ENCODE measurements at regions of chr2 and their contacts with region 1.

Region 1: DNA sequence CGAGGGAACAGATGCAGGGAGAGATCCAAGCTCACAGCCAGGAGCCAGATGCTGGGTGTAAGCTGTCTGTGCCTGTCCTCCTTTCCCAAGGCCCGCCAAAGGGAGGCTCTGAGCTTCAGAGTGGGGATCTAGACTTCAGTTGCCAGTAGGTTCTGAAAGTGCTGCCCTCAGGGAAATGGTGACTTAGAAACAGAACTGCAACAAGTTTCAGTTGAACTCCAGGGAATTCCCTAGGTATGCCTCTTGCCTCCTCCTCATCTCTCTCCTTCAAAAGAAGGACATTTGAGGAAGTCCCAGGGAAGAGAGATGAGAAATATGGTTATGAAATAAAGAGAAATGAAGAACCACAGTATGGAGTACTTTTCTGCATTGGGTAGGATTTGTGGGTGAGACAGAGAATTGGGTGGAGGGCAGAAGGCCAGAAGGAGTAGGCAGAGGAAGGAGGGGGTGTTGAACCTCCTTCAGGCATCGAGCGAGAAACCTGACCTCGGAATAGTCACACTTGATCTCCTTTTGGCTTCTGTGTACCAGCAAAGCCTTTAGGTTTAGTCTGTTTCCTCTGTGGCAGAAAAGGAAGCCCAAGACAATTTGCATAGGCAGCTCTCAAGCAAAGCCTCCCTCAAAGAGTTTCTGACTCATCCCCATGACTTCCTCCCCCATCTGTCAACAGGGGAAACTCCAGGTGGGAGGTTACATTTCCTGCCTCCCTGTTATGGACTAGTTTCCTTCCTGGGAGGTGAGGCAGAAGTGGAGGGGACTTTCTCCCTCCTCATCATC is 45.7 kb downstream of the QPCT start:
- DNase-seq: no peak
- H3K4me3 ChIP-seq: no peak overlapping the region; the same call in 1 of the 2 replicates
- CTCF ChIP-seq: no peak

Region 2: GRCh38 chr2:37376421-37377186 is 13.6 kb before region 1 on chr2:
- CTCF ChIA-PET with region 1: interaction called, 17 read pairs
- POLR2A ChIA-PET with region 1: interaction called, 3 read pairs
- DNase-seq: no peak
- H3K4me3 ChIP-seq: peak overlapping the region; percentile 15; the same call in 1 of the 2 replicates
- CTCF ChIP-seq: no peak

Region 3: DNA sequence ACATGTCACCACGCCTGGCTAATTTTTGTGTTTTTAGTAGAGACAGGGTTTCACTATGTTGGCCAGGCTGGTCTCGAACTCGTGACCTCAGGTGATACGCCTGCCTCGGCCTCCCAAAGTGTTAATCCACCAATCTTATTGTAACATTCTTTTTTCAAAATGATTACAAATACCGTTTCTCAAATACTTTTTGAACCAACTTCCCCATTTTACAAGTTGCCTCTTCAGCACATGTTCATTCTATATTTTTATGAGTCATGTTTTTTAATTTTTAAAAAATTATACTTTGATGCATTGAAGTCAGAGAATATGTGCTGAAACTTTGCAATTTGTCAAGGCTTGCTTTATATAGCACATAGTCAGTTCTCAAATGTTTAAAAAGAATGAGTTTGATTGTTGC is 12.5 kb after region 1 on chr2:
- CTCF ChIA-PET with region 1: interaction called, 100 read pairs
- POLR2A ChIA-PET with region 1: no interaction called
- DNase-seq: no peak
- H3K4me3 ChIP-seq: no peak overlapping the region
- CTCF ChIP-seq: no peak

Region 4: GRCh38 chr2:37890893-37891495 is 500.8 kb after region 1 on chr2:
- CTCF ChIA-PET with region 1: interaction called, 400 read pairs
- POLR2A ChIA-PET with region 1: no interaction called
- DNase-seq: no peak
- H3K4me3 ChIP-seq: no peak overlapping the region
- CTCF ChIP-seq: peak; percentile 84

Measured in AG04449 (cell line).